ENCODE measurements at regions of chr15 and their contacts with region 1.

Region 1: DNA sequence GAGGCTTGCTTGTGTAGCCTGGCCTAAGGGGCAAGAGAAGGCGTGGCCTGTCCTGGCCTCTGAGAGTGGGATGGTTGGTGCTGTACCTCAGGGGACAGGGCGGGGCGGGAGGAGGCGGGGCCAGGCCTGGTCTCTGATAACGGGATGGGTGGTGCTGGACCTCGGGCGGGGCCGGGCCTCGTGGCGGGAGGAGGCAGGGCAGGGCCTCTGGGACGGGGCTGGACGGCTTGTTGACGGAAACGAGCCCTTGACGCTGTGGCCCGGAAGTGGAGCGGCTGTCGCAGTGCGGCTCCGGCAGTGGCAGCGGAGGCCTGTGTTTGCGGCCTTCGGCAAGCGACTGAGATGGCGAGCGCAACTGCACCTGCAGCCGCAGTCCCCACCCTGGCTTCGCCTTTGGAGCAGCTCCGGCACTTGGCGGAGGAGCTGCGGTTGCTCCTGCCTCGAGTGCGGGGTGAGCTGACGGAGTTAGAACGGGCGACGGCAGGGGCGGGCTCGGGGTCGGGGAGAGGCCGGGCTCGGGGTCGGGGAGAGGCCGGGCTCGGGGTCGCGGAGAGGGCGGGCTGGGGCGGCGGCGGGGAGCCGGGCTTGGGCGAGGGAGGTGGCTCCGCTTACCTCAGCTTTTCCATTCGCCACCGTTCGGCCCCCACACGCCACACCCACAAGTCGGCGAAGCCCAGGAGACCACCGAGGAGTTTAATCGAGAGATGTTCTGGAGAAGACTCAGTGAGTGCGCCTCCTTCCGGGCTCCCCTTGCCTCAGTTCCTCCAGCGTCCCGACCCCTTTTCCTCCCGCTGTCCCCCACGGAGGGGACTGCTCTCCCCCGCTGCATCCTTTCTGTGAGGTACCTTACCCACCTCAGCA is at the start of gene CCNDBP1:
- H3K4me3 Mint-ChIP-seq: peak within 1 kb of the TSS; percentile 98
- H3K27ac Mint-ChIP-seq: peak within 1 kb of the TSS; percentile 95
- H3K4me1 Mint-ChIP-seq: peaks cover 36% of the 10 kb centered on the region
- H3K27me3 Mint-ChIP-seq: no peaks in the 10 kb centered on the region

Region 2: DNA sequence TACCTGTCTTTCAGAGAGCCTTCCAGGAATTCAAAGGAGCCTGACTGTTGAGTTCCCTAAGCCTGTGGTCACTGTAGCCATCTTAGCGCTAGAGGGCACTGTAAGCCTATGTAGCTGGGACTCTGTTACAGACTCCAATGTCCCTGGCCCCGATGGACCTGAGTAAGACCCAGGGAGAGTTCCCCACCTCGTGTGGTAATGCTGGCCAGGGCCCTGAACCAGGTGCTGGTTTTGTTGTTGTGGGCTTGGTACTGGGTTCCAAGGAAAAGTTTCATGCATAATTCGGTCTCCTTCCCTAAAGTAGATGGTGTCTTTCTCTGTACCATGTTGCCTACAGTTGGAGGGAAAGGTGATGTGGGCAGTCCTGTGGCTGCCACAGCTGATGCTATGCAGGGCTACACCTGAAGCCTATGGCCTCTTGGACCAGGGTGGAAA is 480.9 kb before region 1 on chr15:
- intact Hi-C with region 1: loop called (anchors 10 kb)
- H3K4me3 Mint-ChIP-seq: no peak overlapping the region
- H3K27ac Mint-ChIP-seq: no peak overlapping the region
- H3K4me1 Mint-ChIP-seq: no peaks in the 10 kb centered on the region
- H3K27me3 Mint-ChIP-seq: no peaks in the 10 kb centered on the region

Region 3: GRCh38 chr15:43105778-43106485 is 79.5 kb before region 1 on chr15 and contains the start of gene UBR1:
- intact Hi-C with region 1: loop called (anchors 10 kb)
- H3K4me3 Mint-ChIP-seq: peak within 1 kb of the TSS; percentile 98
- H3K27ac Mint-ChIP-seq: peak within 1 kb of the TSS; percentile 98
- H3K4me1 Mint-ChIP-seq: peaks cover 31% of the 10 kb centered on the region
- H3K27me3 Mint-ChIP-seq: no peaks in the 10 kb centered on the region

Region 4: GRCh38 chr15:43285609-43286037 is 100.2 kb after region 1 on chr15:
- intact Hi-C with region 1: loop called (anchors 5 kb)
- H3K4me3 Mint-ChIP-seq: no peak overlapping the region
- H3K27ac Mint-ChIP-seq: no peak overlapping the region
- H3K4me1 Mint-ChIP-seq: peaks cover 17% of the 10 kb centered on the region
- H3K27me3 Mint-ChIP-seq: peaks cover 9% of the 10 kb centered on the region